ENCODE measurements at regions of chr1 and their contacts with region 1.

Region 1: DNA sequence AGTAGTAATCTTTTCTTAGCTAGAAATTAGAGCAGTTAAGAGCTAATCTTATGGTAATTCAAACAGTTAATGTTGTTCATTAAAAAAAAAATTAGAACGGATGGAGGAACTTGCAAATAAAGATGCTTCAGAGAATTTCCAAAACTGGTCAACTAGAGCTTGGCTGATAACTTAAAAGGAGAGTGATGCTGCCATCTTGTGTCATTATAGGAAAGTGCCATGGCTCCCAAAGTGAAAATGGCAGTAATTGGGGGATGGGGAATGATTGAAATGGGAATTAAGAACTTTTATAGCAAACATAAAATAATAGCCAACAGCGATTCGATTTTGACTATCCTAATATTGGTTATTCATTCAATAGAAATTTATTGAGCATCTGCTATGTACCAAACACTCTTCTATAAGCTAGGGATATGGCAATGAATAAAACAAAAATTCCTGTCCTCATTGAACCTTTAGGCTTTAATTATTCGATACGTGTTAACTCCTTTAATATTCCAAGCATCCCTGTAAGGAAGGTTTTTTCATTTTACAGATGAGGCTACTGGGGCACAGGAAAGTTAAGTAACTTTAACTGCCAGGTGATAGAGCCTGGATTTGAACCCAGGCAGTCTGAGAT is 5.7 kb upstream of the PLPP3 start:
- DNase-seq: peak; percentile 71
- ATAC-seq: peak; percentile 64
- H3K4me3 ChIP-seq: no peak overlapping the region
- H3K4me3 Mint-ChIP-seq: no peak overlapping the region
- H3K27ac ChIP-seq: no peak overlapping the region
- H3K27ac Mint-ChIP-seq: no peak overlapping the region
- H3K4me1 ChIP-seq: peaks cover 0 to 2% of the 10 kb centered on the region in 2 donors
- H3K4me1 Mint-ChIP-seq: peaks cover 7% of the 10 kb centered on the region
- H3K27me3 ChIP-seq: no peaks in the 10 kb centered on the region
- H3K27me3 Mint-ChIP-seq: peaks cover 3% of the 10 kb centered on the region
- CTCF ChIP-seq: peak; percentile 98

Region 2: GRCh38 chr1:54944610-54945544 is 1640.1 kb before region 1 on chr1:
- CTCF ChIA-PET with region 1: interaction called, 13 read pairs
- POLR2A ChIA-PET with region 1: no interaction called
- intact Hi-C with region 1: no loop called
- DNase-seq: peak; percentile 62
- ATAC-seq: peak; percentile 47
- H3K4me3 ChIP-seq: no peak overlapping the region
- H3K4me3 Mint-ChIP-seq: no peak overlapping the region
- H3K27ac ChIP-seq: no peak overlapping the region
- H3K27ac Mint-ChIP-seq: no peak overlapping the region
- H3K4me1 ChIP-seq: peaks cover 0 to 4% of the 10 kb centered on the region in 2 donors
- H3K4me1 Mint-ChIP-seq: peaks cover 4% of the 10 kb centered on the region
- H3K27me3 ChIP-seq: no peaks in the 10 kb centered on the region
- H3K27me3 Mint-ChIP-seq: peaks cover 32% of the 10 kb centered on the region
- CTCF ChIP-seq: peak; percentile 79

Region 3: DNA sequence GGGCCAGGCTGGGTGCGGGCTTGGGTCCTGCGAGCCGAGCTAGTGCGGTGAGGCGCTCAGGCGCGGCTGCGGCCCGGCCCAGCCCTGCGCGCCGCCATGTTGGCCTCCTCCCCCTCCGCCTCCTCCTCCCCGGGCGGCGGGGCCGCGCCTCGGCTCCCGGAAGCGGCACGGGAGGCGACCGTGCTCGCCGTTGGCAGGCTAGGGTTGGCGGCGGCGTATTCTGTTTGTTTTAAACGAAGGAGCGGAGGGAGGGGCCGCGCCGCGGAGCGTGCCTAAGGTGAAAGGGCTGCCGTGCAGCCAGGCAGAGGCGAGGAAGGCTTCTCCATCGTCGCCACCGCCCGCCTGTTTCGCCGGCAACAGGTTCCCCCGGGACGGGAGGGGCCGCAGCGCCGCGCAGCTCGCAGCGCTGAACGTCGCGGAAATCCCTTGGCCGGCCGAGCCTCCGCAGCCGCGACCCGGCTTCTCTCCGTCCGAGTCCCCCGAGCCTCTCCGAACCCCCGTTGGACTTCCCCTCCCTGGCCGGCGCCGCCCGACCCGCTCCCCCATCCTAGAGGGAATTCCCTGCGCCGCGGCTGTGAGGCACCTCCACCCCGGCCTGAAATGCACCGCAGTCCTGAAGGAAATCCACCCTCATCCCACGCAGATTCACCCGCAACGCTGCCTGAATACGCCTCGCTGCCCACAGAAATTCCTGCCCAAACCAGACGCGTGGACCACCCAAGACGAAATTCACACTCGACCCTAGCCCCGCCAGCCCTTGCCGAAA is 1369.6 kb before region 1 on chr1 and contains the start of gene USP24:
- CTCF ChIA-PET with region 1: no interaction called
- POLR2A ChIA-PET with region 1: no interaction called
- intact Hi-C with region 1: loop called (anchors 10 kb)
- DNase-seq: peak; percentile 90
- ATAC-seq: peak; percentile 74
- H3K4me3 ChIP-seq: peak within 1 kb of the TSS; percentile 72 to 83 (median 79)
- H3K4me3 Mint-ChIP-seq: peak within 1 kb of the TSS; percentile 98
- H3K27ac ChIP-seq: peak within 1 kb of the TSS; percentile 95 to 97
- H3K27ac Mint-ChIP-seq: peak within 1 kb of the TSS; percentile 99
- H3K4me1 ChIP-seq: peaks cover 54 to 59% of the 10 kb centered on the region in 2 donors
- H3K4me1 Mint-ChIP-seq: peaks cover 64% of the 10 kb centered on the region
- H3K27me3 ChIP-seq: no peaks in the 10 kb centered on the region
- H3K27me3 Mint-ChIP-seq: no peaks in the 10 kb centered on the region
- CTCF ChIP-seq: no peak
- total RNA-seq, gene USP24: 152 and 183 TPM in 2 replicates

Region 4: GRCh38 chr1:55337801-55338447 is 1247.1 kb before region 1 on chr1:
- CTCF ChIA-PET with region 1: interaction called, 15 read pairs
- POLR2A ChIA-PET with region 1: no interaction called
- intact Hi-C with region 1: no loop called
- DNase-seq: peak; percentile 34
- ATAC-seq: no peak
- H3K4me3 ChIP-seq: no peak overlapping the region
- H3K4me3 Mint-ChIP-seq: no peak overlapping the region
- H3K27ac ChIP-seq: no peak overlapping the region
- H3K27ac Mint-ChIP-seq: no peak overlapping the region
- H3K4me1 ChIP-seq: no peaks in the 10 kb centered on the region
- H3K4me1 Mint-ChIP-seq: peaks cover 3% of the 10 kb centered on the region
- H3K27me3 ChIP-seq: no peaks in the 10 kb centered on the region
- H3K27me3 Mint-ChIP-seq: peaks cover 11% of the 10 kb centered on the region
- CTCF ChIP-seq: peak; percentile 40

Region 5: DNA sequence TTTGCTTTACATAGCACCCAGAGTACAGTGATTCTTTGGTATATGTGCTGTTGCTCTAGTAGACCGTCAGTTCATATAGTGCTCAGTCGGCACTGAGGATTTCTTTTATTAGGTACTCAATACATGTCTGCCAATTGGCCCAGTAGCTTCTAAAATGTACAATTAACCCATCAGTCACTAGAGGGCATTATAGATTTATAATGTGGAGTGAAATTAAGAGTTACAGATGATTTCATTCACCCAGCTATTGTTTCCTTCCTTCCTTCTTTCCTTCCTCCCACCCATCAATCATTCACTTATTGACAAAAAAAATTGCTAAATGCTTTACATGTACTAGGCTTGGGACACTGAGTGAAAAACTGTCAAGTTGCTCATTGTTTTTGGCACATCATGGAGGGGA is 1106.3 kb before region 1 on chr1:
- CTCF ChIA-PET with region 1: interaction called, 25 read pairs
- POLR2A ChIA-PET with region 1: no interaction called
- intact Hi-C with region 1: no loop called
- DNase-seq: no peak
- ATAC-seq: no peak
- H3K4me3 ChIP-seq: no peak overlapping the region
- H3K4me3 Mint-ChIP-seq: no peak overlapping the region
- H3K27ac ChIP-seq: no peak overlapping the region
- H3K27ac Mint-ChIP-seq: no peak overlapping the region
- H3K4me1 ChIP-seq: no peaks in the 10 kb centered on the region
- H3K4me1 Mint-ChIP-seq: no peaks in the 10 kb centered on the region
- H3K27me3 ChIP-seq: peaks cover 0 to 5% (median 0%) of the 10 kb centered on the region in 4 experiments
- H3K27me3 Mint-ChIP-seq: peaks cover 35% of the 10 kb centered on the region
- CTCF ChIP-seq: no peak

Region 6: GRCh38 chr1:56409094-56409691 is 175.8 kb before region 1 on chr1:
- CTCF ChIA-PET with region 1: interaction called, 107 read pairs
- POLR2A ChIA-PET with region 1: no interaction called
- intact Hi-C with region 1: loop called (anchors 1 kb)
- DNase-seq: peak; percentile 61
- ATAC-seq: no peak
- H3K4me3 ChIP-seq: no peak overlapping the region
- H3K4me3 Mint-ChIP-seq: no peak overlapping the region
- H3K27ac ChIP-seq: no peak overlapping the region
- H3K27ac Mint-ChIP-seq: no peak overlapping the region
- H3K4me1 ChIP-seq: peaks cover 11 to 16% of the 10 kb centered on the region in 2 donors
- H3K4me1 Mint-ChIP-seq: peaks cover 27% of the 10 kb centered on the region
- H3K27me3 ChIP-seq: no peaks in the 10 kb centered on the region
- H3K27me3 Mint-ChIP-seq: no peaks in the 10 kb centered on the region
- CTCF ChIP-seq: peak; percentile 67